Right ventricle myocardium superior (tissue), 1 donor: ENCODE measurements at regions of chr2 and their contacts with region 1.

Region 1: GRCh38 chr2:39696838-39697237 is 31.1 kb downstream of the TMEM178A start:
- DNase-seq: no peak
- ATAC-seq: peak; percentile 79

Region 2: GRCh38 chr2:39379643-39380524 is 317.0 kb before region 1 on chr2:
- intact Hi-C with region 1: loop called (anchors 10 kb)
- DNase-seq: no peak
- ATAC-seq: peak; percentile 88

Region 3: GRCh38 chr2:39513641-39514094 is 183.2 kb before region 1 on chr2:
- intact Hi-C with region 1: loop called (anchors 10 kb)
- DNase-seq: no peak
- ATAC-seq: peak; percentile 40

Region 4: DNA sequence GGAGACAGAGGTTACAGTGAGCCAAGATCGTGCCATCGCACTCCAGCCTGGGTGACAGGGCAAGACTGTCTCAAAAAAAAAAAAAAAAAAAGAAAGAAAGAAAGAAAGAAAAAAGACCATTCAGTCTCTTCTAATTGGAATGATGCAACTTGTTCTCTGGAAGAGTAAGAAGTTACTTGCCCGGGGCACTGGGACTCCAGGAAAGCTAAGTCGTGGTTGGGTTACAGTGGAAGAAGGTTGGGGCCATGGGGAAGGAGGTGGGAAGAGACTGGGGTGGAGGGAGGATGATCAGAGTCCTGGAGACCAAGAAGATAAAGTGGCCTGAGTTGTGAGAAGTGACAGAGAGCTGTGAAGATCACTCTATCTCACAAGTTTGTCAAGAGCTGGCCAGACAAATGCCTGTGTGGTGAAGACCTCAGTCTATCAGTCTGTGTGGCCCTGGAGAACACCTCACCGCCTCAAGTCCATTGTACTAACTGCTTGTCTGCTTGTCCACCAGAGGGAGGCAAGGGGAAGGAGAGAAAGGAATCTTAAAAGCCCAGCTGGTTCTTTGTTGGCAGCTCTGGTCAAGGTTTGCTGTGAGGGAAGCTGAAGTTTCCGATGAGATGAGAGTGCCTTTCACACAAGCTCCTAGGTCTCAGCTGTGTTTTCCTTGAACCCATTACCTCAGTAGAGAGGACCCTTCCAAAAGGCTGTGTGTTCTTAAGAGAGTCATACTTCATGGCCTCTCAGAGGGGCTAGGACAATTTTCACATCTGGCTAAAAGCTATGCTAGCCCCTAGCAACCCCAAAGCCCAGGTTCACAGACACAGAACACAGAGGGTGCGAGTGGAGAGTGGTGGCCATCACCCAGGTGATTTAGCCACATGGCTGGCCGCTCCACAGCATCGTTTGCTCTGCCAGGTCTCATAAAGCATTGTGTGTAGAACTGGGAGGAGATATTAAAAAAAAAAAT is 103.1 kb before region 1 on chr2:
- intact Hi-C with region 1: loop called (anchors 5 kb)
- DNase-seq: no peak
- ATAC-seq: peak; percentile 92